Naive thymus-derived CD4-positive, alpha-beta T cell (primary cell): ENCODE measurements at regions of chr17 and their contacts with region 1.

Region 1: DNA sequence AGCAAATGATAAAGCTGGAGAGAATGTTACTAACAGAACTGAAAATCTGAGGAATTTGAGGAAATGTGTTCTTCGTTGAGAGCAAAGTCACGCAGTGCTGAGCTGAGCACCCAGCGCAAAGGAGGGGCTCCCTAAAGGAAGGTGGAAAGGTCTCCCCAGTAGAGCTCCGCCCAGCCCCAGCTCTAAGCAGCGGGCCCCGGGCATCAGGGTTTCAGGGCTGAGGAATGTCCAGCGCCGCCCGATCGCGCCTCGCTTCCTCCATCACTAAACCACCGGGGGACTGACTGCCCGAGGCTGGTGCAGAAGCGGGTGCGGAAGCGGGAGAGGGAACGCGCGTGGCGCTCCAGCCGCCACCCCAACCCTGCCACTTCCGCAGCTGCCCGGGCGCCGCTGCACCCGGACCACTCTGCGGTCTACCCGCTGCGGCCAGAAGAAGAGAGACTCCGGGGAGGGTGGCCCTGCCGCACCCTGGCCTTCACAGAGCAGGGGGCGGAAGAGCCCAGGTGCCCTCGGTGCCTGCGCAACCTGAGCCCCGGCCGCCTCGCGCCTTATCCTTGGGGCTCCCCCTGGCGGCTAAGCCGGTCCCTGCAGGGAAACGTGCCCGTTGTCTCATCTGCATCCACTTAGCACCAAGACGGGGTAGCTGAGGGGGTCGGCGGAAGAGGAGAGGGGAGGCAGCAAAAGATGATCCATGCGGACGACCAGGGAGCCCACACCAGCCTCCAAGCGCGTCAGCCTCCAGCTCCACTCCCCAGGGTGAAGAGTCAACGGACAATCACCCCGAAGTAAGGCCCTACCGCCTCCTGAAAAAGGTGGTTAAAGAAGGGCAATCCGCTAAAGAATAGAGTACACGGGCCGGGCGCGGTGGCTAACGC is 12.4 kb upstream of the GUCY2D start:
- DNase-seq: peak; percentile 82 to 99 (median 91)
- ATAC-seq: peak; percentile 96
- H3K4me3 ChIP-seq: peak overlapping the region; percentile 58
- H3K4me3 Mint-ChIP-seq: peak overlapping the region; percentile 80 to 88 (median 84)
- H3K27ac ChIP-seq: peak overlapping the region; percentile 65
- H3K27ac Mint-ChIP-seq: peak overlapping the region; percentile 80 to 95 (median 90)
- H3K4me1 ChIP-seq: peaks cover 10 to 13% of the 10 kb centered on the region in 2 donors
- H3K4me1 Mint-ChIP-seq: peaks cover 17 to 26% (median 20%) of the 10 kb centered on the region in 7 donors
- H3K27me3 ChIP-seq: no peaks in the 10 kb centered on the region
- H3K27me3 Mint-ChIP-seq: peaks cover 0 to 16% (median 0%) of the 10 kb centered on the region in 5 donors

Region 2: GRCh38 chr17:7745748-7746470 is 244.1 kb before region 1 on chr17:
- CTCF ChIA-PET with region 1: interaction called, 4 read pairs
- POLR2A ChIA-PET with region 1: no interaction called
- intact Hi-C with region 1: loop called (anchors 1 to 2 kb)
- DNase-seq: no peak
- ATAC-seq: no peak
- H3K4me3 ChIP-seq: no peak overlapping the region
- H3K4me3 Mint-ChIP-seq: no peak overlapping the region
- H3K27ac ChIP-seq: no peak overlapping the region
- H3K27ac Mint-ChIP-seq: no peak overlapping the region
- H3K4me1 ChIP-seq: no peaks in the 10 kb centered on the region
- H3K4me1 Mint-ChIP-seq: peaks cover 0 to 2% (median 0%) of the 10 kb centered on the region in 7 donors
- H3K27me3 ChIP-seq: no peaks in the 10 kb centered on the region
- H3K27me3 Mint-ChIP-seq: peaks cover 2 to 18% (median 10%) of the 10 kb centered on the region in 5 donors

Region 3: GRCh38 chr17:7834962-7835813 is 154.8 kb before region 1 on chr17:
- CTCF ChIA-PET with region 1: interaction called, 7 read pairs
- POLR2A ChIA-PET with region 1: interaction called, 8 read pairs
- intact Hi-C with region 1: loop called in 1 of 2 experiments (anchors 1 kb)
- DNase-seq: peak; percentile 76 to 97 (median 95)
- ATAC-seq: peak; percentile 70
- H3K4me3 ChIP-seq: peak overlapping the region; percentile 96
- H3K4me3 Mint-ChIP-seq: peak overlapping the region; percentile 91 to 99 (median 96)
- H3K27ac ChIP-seq: peak overlapping the region; percentile 96
- H3K27ac Mint-ChIP-seq: peak overlapping the region; percentile 95 to 100 (median 99)
- H3K4me1 ChIP-seq: peaks cover 29 to 38% of the 10 kb centered on the region in 2 donors
- H3K4me1 Mint-ChIP-seq: peaks cover 28 to 60% (median 44%) of the 10 kb centered on the region in 7 donors
- H3K27me3 ChIP-seq: no peaks in the 10 kb centered on the region
- H3K27me3 Mint-ChIP-seq: peaks cover 0 to 28% (median 0%) of the 10 kb centered on the region in 5 donors

Region 4: GRCh38 chr17:7856883-7857723 is 132.9 kb before region 1 on chr17 and contains the start of gene NAA38:
- CTCF ChIA-PET with region 1: interaction called, 133 read pairs
- POLR2A ChIA-PET with region 1: interaction called, 5 read pairs
- intact Hi-C with region 1: loop called (anchors 1 kb)
- DNase-seq: peak; percentile 81 to 99 (median 97)
- ATAC-seq: peak; percentile 87
- H3K4me3 ChIP-seq: peak within 1 kb of the TSS; percentile 70
- H3K4me3 Mint-ChIP-seq: no peak within 1 kb of the TSS
- H3K27ac ChIP-seq: peak within 1 kb of the TSS; percentile 83
- H3K27ac Mint-ChIP-seq: no peak within 1 kb of the TSS
- H3K4me1 ChIP-seq: peaks cover 25 to 26% of the 10 kb centered on the region in 2 donors
- H3K4me1 Mint-ChIP-seq: peaks cover 0 to 16% (median 5%) of the 10 kb centered on the region in 7 donors
- H3K27me3 ChIP-seq: no peaks in the 10 kb centered on the region
- H3K27me3 Mint-ChIP-seq: no peaks in the 10 kb centered on the region
- total RNA-seq, gene NAA38: 22.1 to 63.8 (median 24.9) TPM

Region 5: DNA sequence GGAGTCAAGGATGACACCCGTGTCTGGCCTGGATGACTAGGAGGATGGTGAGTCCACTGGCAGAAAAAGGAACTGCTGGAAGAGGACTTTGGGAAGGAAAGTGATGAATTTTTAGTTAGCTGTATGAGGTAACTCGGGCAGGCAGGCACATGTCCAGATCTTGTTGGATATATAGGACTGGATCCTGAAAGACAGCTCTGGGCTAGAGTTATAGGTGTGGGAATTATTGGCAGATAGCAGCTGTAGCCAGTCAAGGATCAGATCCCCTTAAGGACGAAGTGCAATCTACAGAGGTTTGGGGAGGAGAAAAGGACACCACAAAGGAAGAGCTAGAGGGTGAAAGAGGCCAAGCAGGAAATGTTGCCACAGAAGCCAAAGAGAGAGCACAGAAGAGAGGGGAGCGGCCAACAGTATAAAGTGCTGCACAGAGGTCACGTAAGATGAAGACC is 122.1 kb before region 1 on chr17:
- CTCF ChIA-PET with region 1: interaction called, 133 read pairs
- POLR2A ChIA-PET with region 1: interaction called, 5 read pairs
- intact Hi-C with region 1: no loop called
- DNase-seq: no peak
- ATAC-seq: peak; percentile 79
- H3K4me3 ChIP-seq: peak overlapping the region; percentile 2
- H3K4me3 Mint-ChIP-seq: peak overlapping the region; percentile 46 to 83 (median 70)
- H3K27ac ChIP-seq: peak overlapping the region; percentile 49
- H3K27ac Mint-ChIP-seq: peak overlapping the region; percentile 53 to 92 (median 87)
- H3K4me1 ChIP-seq: peaks cover 16 to 20% of the 10 kb centered on the region in 2 donors
- H3K4me1 Mint-ChIP-seq: peaks cover 23 to 46% (median 43%) of the 10 kb centered on the region in 7 donors
- H3K27me3 ChIP-seq: no peaks in the 10 kb centered on the region
- H3K27me3 Mint-ChIP-seq: no peaks in the 10 kb centered on the region

Region 6: GRCh38 chr17:7931709-7932482 is 58.1 kb before region 1 on chr17 and contains the starts of genes CNTROB and TRAPPC1:
- CTCF ChIA-PET with region 1: interaction called, 22 read pairs
- POLR2A ChIA-PET with region 1: interaction called, 3 read pairs
- intact Hi-C with region 1: loop called in 1 of 2 experiments (anchors 1 kb)
- DNase-seq: peak; percentile 97 to 100 (median 99)
- ATAC-seq: peak; percentile 98
- H3K4me3 ChIP-seq: peak within 1 kb of the TSS; percentile 66
- H3K4me3 Mint-ChIP-seq: peak within 1 kb of the TSS; percentile 95 to 100 (median 96)
- H3K27ac ChIP-seq: peak within 1 kb of the TSS; percentile 88
- H3K27ac Mint-ChIP-seq: peak within 1 kb of the TSS; percentile 82 to 99 (median 96)
- H3K4me1 ChIP-seq: peaks cover 20 to 28% of the 10 kb centered on the region in 2 donors
- H3K4me1 Mint-ChIP-seq: peaks cover 31 to 60% (median 54%) of the 10 kb centered on the region in 7 donors
- H3K27me3 ChIP-seq: no peaks in the 10 kb centered on the region
- H3K27me3 Mint-ChIP-seq: no peaks in the 10 kb centered on the region
- total RNA-seq, gene CNTROB: 29.0 to 50.5 (median 33.6) TPM
- total RNA-seq, gene TRAPPC1: 71.4 to 216 (median 103) TPM